ENCODE measurements at regions of chr3 and their contacts with region 1.

Region 1: DNA sequence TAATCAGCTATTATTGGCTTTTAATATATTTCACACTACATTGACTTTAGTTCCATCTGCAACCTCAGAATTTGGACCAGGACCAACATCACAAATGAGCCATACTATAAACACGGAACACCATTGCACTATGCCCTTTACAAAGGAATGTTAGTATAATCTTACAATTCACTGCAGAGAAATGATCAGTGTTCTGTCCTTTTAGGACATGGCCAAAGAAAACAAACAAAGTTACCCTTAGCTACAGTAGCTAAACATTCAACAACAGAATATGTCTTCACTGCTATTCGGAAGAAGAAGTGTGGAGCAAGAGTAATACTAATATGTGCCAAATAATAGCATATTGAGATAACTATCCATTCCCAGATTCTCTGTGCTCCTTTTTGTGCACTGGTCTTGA is 90.4 kb downstream of the NAALADL2 start:
- DNase-seq: no peak
- H3K4me3 ChIP-seq: no peak overlapping the region
- H3K27ac ChIP-seq: peak overlapping the region; percentile 50 to 56
- H3K4me1 ChIP-seq: no peaks in the 10 kb centered on the region
- H3K27me3 ChIP-seq: no peaks in the 10 kb centered on the region
- CTCF ChIP-seq: no peak
- POLR2A ChIP-seq: no peak

Region 2: GRCh38 chr3:174937478-174937877 is 12.0 kb before region 1 on chr3:
- intact Hi-C with region 1: loop called (anchors 1 kb)
- DNase-seq: no peak
- H3K4me3 ChIP-seq: no peak overlapping the region
- H3K27ac ChIP-seq: peak overlapping the region in 1 of 2 donors; percentile 10
- H3K4me1 ChIP-seq: no peaks in the 10 kb centered on the region
- H3K27me3 ChIP-seq: no peaks in the 10 kb centered on the region
- CTCF ChIP-seq: no peak
- POLR2A ChIP-seq: no peak

Measured in breast epithelium (tissue), 4 donors.